ENCODE measurements at regions of chr17 and their contacts with region 1.

Region 1: DNA sequence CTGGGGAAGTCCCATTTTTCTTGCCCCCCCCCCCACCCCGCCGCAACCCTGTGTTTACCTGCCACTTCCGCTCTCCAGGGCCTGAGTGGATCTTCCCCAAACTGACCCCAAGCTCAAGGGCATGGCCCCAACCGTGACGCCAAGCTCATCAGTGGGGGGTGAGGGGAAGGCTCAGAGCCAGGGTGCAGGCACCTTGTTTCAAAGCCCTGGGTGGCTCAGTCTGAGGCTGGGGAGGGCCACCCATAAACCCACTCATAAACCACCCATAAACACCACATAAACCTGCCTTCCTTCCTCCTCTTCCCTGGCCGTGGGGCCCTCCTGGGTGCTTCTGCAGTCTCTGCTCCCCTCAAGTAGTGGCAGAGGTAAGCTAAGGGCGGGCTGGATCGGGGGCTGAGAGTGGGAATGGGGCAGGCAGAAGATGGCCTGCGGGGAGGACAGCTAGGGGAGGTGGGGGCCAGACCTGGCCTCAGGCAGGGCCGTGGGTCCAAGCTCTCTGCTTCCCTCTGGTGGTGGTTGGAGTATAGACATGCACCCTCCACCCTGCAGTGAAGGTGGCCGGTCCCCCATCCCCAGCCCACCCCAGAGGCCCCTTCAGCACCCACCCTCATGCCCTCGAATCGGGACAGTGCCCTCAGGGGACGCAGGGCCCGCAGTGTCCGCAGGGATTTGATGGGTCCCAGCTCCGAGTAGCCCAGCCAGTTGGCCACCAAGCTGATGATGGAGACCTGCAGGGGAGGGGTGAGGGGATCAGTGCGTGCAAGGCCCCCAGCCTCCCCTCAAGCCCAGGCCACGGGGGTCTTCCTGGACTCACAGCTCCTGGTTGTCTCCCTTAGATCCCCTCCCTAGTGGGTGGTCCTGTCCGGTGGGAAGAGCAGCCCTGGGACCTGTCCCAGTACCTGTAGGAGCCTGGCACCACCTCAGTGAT is 14.6 kb upstream of the CD79B start:
- DNase-seq: peak; percentile 61 to 76
- H3K4me3 ChIP-seq: no peak overlapping the region
- H3K4me3 Mint-ChIP-seq: no peak overlapping the region
- H3K27ac Mint-ChIP-seq: no peak overlapping the region
- H3K4me1 ChIP-seq: no peaks in the 10 kb centered on the region
- H3K4me1 Mint-ChIP-seq: no peaks in the 10 kb centered on the region
- H3K27me3 ChIP-seq: no peaks in the 10 kb centered on the region
- H3K27me3 Mint-ChIP-seq: peaks cover 4% of the 10 kb centered on the region
- CTCF ChIP-seq: peak; percentile 89 to 95

Region 2: DNA sequence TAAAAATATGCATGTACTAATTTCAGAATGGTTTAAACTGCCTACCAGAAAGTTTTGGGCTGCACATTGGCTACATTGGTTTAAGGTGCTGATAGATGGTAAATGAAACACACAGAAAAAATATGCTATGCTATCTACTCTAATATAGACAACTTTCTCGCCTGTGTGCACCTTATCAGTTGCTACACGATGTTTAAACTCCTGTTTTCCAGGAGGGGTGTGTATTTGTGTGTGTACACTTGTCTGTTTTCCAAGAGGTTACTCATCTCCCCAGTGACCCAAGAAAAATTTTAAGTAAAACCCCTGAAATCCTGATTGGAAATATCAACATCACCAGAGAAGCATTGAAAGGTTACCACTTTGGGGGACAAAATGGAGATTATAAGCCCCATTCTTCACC is 141.1 kb before region 1 on chr17:
- CTCF ChIA-PET with region 1: no interaction called
- POLR2A ChIA-PET with region 1: no interaction called
- intact Hi-C with region 1: no loop called
- DNase-seq: no peak
- H3K4me3 ChIP-seq: no peak overlapping the region
- H3K4me3 Mint-ChIP-seq: no peak overlapping the region
- H3K27ac Mint-ChIP-seq: no peak overlapping the region
- H3K4me1 ChIP-seq: peaks cover 8% of the 10 kb centered on the region
- H3K4me1 Mint-ChIP-seq: peaks cover 18% of the 10 kb centered on the region
- H3K27me3 ChIP-seq: no peaks in the 10 kb centered on the region
- H3K27me3 Mint-ChIP-seq: no peaks in the 10 kb centered on the region
- CTCF ChIP-seq: no peak

Region 3: GRCh38 chr17:63834431-63835166 is 112.1 kb before region 1 on chr17:
- CTCF ChIA-PET with region 1: no interaction called
- POLR2A ChIA-PET with region 1: no interaction called
- intact Hi-C with region 1: no loop called
- DNase-seq: peak; percentile 73 to 76
- H3K4me3 ChIP-seq: no peak overlapping the region
- H3K4me3 Mint-ChIP-seq: no peak overlapping the region
- H3K27ac Mint-ChIP-seq: no peak overlapping the region
- H3K4me1 ChIP-seq: no peaks in the 10 kb centered on the region; the same call in 1 of the 2 replicates
- H3K4me1 Mint-ChIP-seq: peaks cover 15% of the 10 kb centered on the region
- H3K27me3 ChIP-seq: no peaks in the 10 kb centered on the region
- H3K27me3 Mint-ChIP-seq: no peaks in the 10 kb centered on the region
- CTCF ChIP-seq: peak; percentile 56 to 66

Region 4: DNA sequence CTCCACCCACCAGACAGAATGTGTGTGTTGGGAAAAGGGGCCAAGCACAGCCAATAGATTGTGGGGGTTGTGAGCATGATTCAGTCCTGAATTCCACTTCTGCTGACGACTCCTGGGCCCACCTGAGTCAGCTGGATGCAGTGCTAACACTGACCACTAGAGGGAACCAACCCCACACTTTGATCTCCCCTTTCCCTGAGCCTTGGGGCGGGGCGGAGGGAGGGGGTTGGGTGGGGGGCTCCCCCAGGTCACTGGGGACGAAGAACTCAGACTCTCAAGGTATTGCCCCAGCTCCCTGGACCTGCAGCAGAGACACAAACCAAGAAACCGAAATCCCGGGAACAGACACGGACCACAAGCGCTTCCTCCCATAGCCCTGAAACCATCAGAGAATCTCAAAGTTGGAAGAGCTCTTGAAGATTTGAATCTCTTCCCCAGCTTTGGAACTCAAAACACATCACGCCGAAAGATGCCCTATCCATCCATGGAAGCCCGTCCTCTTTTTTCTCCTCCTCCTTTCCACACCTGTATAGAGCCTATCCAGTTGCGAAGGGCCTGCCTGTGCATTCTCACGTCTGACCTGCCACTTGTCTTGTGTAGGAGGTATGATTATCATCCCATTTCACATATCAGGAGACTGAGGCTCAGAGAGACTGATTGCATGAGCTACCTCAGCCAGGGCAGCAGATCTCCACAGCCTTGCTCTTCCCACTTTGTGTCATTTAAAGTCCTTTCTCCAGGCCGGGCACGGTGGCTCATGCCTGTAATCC is 34.9 kb before region 1 on chr17:
- CTCF ChIA-PET with region 1: interaction called, 16 read pairs
- POLR2A ChIA-PET with region 1: no interaction called
- intact Hi-C with region 1: no loop called
- DNase-seq: peak in 1 of 2 experiments; percentile 66
- H3K4me3 ChIP-seq: no peak overlapping the region
- H3K4me3 Mint-ChIP-seq: no peak overlapping the region
- H3K27ac Mint-ChIP-seq: no peak overlapping the region
- H3K4me1 ChIP-seq: no peaks in the 10 kb centered on the region
- H3K4me1 Mint-ChIP-seq: no peaks in the 10 kb centered on the region
- H3K27me3 ChIP-seq: no peaks in the 10 kb centered on the region; the same call in 1 of the 2 replicates
- H3K27me3 Mint-ChIP-seq: peaks cover 31% of the 10 kb centered on the region
- CTCF ChIP-seq: peak; percentile 80 to 87

Region 5: GRCh38 chr17:63919311-63919723 is 27.4 kb before region 1 on chr17:
- CTCF ChIA-PET with region 1: interaction called, 41 read pairs
- POLR2A ChIA-PET with region 1: no interaction called
- intact Hi-C with region 1: loop called (anchors 1 kb)
- DNase-seq: peak; percentile 66 to 77
- H3K4me3 ChIP-seq: no peak overlapping the region
- H3K4me3 Mint-ChIP-seq: no peak overlapping the region
- H3K27ac Mint-ChIP-seq: no peak overlapping the region
- H3K4me1 ChIP-seq: no peaks in the 10 kb centered on the region
- H3K4me1 Mint-ChIP-seq: no peaks in the 10 kb centered on the region
- H3K27me3 ChIP-seq: no peaks in the 10 kb centered on the region
- H3K27me3 Mint-ChIP-seq: peaks cover 18% of the 10 kb centered on the region
- CTCF ChIP-seq: peak; percentile 92 to 94

Region 6: DNA sequence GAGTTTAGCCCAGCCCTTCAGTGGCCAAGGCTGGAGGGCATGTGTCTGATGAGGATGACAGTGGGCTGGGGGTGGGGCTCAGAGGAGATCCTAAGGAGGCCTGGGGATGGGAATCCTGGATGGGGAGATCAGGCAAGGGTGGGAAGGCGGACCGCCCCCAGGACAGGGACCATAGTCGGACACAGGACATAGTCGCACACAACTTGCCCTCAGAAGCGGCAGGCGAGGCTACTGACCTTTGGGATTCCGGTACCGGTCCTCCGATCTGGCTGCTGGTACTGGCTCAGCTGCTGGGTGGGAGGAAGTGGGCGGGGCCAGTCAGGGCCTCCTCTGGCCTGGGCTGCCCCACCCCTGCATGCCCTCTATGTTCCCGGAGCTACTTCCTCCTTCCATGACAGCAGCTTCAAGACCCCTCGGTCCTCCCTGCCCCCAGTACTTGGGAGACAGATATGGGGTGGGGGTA is 15.6 kb before region 1 on chr17:
- CTCF ChIA-PET with region 1: interaction called, 10 read pairs
- POLR2A ChIA-PET with region 1: no interaction called
- intact Hi-C with region 1: no loop called
- DNase-seq: no peak
- H3K4me3 ChIP-seq: no peak overlapping the region
- H3K4me3 Mint-ChIP-seq: no peak overlapping the region
- H3K27ac Mint-ChIP-seq: no peak overlapping the region
- H3K4me1 ChIP-seq: no peaks in the 10 kb centered on the region
- H3K4me1 Mint-ChIP-seq: no peaks in the 10 kb centered on the region
- H3K27me3 ChIP-seq: no peaks in the 10 kb centered on the region
- H3K27me3 Mint-ChIP-seq: peaks cover 1% of the 10 kb centered on the region
- CTCF ChIP-seq: no peak

Region 7: GRCh38 chr17:63984651-63985386 is 38.1 kb after region 1 on chr17:
- CTCF ChIA-PET with region 1: interaction called, 6 read pairs
- POLR2A ChIA-PET with region 1: no interaction called
- intact Hi-C with region 1: loop called (anchors 5 kb)
- DNase-seq: no peak
- H3K4me3 ChIP-seq: no peak overlapping the region
- H3K4me3 Mint-ChIP-seq: no peak overlapping the region
- H3K27ac Mint-ChIP-seq: no peak overlapping the region
- H3K4me1 ChIP-seq: peaks cover 9% of the 10 kb centered on the region; the same call in 1 of the 2 replicates
- H3K4me1 Mint-ChIP-seq: no peaks in the 10 kb centered on the region
- H3K27me3 ChIP-seq: no peaks in the 10 kb centered on the region
- H3K27me3 Mint-ChIP-seq: no peaks in the 10 kb centered on the region
- CTCF ChIP-seq: no peak

Region 8: DNA sequence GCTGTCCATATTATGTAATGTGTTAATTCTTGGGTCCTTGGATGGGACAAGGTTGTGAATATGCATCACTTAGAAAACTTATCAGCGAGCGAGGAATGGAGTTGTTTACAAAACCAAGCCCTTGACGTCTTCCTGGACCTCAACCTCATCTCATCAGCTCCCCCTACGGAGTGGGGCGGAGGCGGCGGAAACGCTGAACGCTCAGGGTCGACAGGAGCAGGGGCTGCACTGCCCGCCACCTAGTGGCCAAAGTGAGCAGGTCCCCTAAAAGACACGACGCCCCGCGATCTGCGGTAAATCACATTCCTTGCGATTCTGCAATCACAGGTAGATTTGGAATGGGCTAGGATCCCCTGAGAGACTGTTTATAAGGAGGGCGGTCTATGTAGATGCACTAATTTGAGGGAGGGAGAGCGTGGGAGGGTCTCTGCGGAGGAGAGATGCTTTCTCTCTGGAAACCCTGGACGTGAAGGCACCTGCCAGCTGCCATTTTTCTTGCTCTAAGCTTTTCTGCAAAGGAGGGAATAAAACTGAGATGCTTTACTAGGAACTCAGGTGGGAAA is 79.1 kb after region 1 on chr17:
- CTCF ChIA-PET with region 1: interaction called, 13 read pairs
- POLR2A ChIA-PET with region 1: no interaction called
- intact Hi-C with region 1: no loop called
- DNase-seq: peak; percentile 86 to 87
- H3K4me3 ChIP-seq: peak overlapping the region; percentile 13; the same call in 1 of the 2 replicates
- H3K4me3 Mint-ChIP-seq: peak overlapping the region; percentile 71
- H3K27ac Mint-ChIP-seq: no peak overlapping the region
- H3K4me1 ChIP-seq: no peaks in the 10 kb centered on the region
- H3K4me1 Mint-ChIP-seq: peaks cover 16% of the 10 kb centered on the region
- H3K27me3 ChIP-seq: no peaks in the 10 kb centered on the region
- H3K27me3 Mint-ChIP-seq: no peaks in the 10 kb centered on the region
- CTCF ChIP-seq: peak; percentile 96 to 97

Region 9: DNA sequence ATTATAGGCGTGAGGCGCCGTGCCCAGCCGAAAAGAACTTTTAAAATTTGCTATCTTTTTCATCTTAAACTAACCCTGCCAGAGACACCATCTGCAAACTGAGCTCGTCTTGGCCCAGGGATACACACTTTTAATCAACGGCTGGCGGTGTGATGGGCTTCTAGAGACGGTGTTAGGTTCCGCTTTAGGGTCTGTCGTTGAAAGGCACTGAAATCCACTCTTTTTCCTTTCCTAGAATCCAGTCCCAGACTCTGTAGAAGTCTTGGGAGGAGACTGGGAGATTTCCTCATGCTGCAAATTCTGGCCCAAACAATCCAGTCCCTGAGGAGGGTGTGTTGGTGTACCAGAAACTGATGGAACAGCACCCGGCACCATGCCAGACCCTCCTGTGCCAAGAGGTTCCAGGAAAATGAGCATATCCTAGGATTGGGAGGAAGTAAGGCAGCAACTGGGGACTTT is 368.4 kb after region 1 on chr17:
- CTCF ChIA-PET with region 1: no interaction called
- POLR2A ChIA-PET with region 1: no interaction called
- intact Hi-C with region 1: no loop called
- DNase-seq: no peak
- H3K4me3 ChIP-seq: no peak overlapping the region
- H3K4me3 Mint-ChIP-seq: no peak overlapping the region
- H3K27ac Mint-ChIP-seq: no peak overlapping the region
- H3K4me1 ChIP-seq: peaks cover 21% of the 10 kb centered on the region
- H3K4me1 Mint-ChIP-seq: peaks cover 20% of the 10 kb centered on the region
- H3K27me3 ChIP-seq: no peaks in the 10 kb centered on the region
- H3K27me3 Mint-ChIP-seq: no peaks in the 10 kb centered on the region
- CTCF ChIP-seq: no peak

Measured in Caco-2 (cell line).